Posterior vena cava (tissue), 2 donors: ENCODE measurements at regions of chr11 and their contacts with region 1.

Region 1: DNA sequence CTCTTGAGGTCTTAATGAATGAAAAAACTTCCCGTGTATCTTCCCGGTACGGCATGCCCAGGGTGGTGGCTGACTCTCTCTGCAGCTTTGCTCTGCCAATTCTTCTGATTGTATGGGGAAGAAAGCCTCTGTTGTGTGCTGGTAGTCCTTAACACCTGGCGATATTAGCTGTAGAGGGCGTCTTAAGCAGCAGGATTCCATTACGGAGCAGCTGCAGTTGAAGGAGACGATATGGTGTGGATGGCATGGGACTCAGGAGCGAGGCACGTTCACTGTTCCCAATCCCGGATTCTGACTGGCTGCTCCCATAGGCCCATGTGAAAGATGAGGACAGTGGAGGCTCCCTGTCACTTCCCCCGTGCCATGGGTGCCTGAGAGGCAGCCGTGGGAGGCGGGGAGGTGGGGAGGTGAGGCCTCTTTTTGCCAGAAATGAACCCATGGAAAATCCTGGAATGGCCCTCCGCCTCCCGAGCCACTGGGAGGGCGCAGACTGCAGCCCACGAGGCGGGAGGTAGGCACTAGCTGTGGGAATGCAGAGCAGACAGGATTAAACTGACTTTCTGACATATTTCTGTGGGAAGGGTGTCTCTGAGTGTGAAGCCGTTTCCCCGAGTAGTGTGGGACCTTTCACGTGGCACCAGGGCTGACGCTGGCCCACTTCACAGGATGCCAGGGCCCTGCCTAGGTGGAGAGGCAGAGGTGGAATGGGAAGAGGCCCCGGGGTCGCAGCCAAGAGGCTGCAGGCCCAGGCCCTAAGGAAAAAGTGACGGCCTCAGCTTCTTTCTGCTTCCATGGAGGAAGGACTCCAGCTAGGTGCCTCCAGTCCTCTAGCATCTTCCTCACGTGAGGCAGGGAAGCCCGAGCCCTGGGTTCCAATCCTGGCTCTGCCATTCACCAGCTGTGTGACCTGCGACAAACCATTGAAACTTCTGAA is 121.4 kb upstream of the CD82 start:
- DNase-seq: no peak

Region 2: DNA sequence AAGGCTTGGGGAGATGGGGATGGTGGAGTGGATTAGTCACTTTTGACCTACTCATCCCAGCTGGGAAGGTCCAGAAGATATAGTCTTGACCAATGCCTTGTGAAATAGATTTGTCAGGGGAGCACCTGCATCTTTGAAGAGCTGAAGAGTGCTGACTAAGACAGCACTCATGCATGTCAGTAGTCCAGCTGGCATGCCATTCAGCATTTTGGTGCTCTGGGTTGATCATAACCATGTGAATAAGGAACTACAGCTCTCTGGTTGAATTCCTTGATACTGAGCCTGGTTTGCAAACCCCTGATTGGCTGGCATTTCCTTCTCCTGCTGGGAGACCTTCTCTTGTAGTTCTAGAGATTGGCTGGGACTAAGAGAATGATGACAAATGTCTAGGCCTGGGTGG is 27.3 kb before region 1 on chr11:
- intact Hi-C with region 1: loop called in 1 of 2 experiments (anchors 1 kb)
- DNase-seq: no peak